HEK293T (cell line): ENCODE measurements at regions of chr7 and their contacts with region 1.

Region 1: GRCh38 chr7:97006036-97006815 is 873 bp downstream of the DLX6 start:
- DNase-seq: peak; percentile 66

Region 2: GRCh38 chr7:96973986-96974385 is 32.2 kb before region 1 on chr7:
- CTCF ChIA-PET with region 1: no interaction called
- POLR2A ChIA-PET with region 1: no interaction called
- DNase-seq: no peak

Region 3: GRCh38 chr7:97016381-97017191 is 10.4 kb after region 1 on chr7:
- CTCF ChIA-PET with region 1: interaction called, 3 read pairs
- POLR2A ChIA-PET with region 1: interaction called, 52 read pairs
- DNase-seq: peak; percentile 57

Region 4: GRCh38 chr7:97027427-97028234 is 21.4 kb after region 1 on chr7:
- CTCF ChIA-PET with region 1: interaction called, 3 read pairs
- POLR2A ChIA-PET with region 1: interaction called, 21 read pairs
- DNase-seq: peak; percentile 76